HCT116 (cell line): ENCODE measurements at regions of chr3 and their contacts with region 1.

Region 1: DNA sequence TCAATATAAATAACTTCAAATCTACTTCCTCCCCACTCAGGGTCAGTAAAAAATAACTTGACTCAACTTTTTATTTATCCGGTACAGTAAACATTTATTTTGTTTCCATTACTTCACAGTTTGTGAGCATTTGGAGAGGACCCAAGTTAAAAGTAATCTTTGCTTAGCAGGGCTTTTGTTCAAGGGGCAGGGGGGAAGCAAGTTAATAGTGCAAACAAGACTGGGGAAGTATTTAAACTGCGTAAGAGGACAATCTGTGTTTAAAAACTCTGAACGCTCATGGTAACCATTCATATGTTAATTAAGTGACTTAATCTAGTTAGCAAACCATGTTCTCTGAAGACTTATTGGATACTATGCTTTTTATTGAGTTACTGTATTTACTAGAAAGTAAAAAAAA is 346.2 kb downstream of the SLC9A9 start:
- DNase-seq: no peak
- ATAC-seq: no peak
- H3K4me3 ChIP-seq: no peak overlapping the region
- H3K27ac ChIP-seq: no peak overlapping the region
- H3K4me1 ChIP-seq: no peaks in the 10 kb centered on the region
- H3K27me3 ChIP-seq: no peaks in the 10 kb centered on the region
- CTCF ChIP-seq: no peak
- POLR2A ChIP-seq: no peak
- RAD21 ChIP-seq: no peak

Region 2: DNA sequence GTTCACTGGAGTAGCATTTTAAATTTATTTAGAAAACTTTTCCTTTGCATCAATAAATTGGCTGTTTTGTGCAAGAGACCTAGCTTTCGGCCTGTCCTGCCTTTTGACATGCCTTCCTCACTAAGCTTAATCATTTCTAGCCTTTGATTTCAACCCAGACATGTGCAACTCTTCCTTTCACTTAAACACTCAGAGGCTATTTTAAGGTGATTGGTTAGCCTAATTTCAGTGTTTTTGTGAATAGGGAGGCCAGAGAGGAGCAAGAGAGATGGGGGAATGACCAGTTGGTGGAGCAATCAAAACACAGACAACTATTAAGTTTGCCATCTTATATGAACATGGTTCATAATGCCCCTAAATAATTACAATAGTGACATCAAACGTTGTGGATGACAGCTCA is 12.8 kb after region 1 on chr3:
- CTCF ChIA-PET with region 1: no interaction called
- POLR2A ChIA-PET with region 1: no interaction called
- RAD21 ChIA-PET with region 1: no interaction called
- intact Hi-C with region 1: loop called (anchors 1 kb)
- DNase-seq: no peak
- ATAC-seq: no peak
- H3K4me3 ChIP-seq: no peak overlapping the region
- H3K27ac ChIP-seq: no peak overlapping the region
- H3K4me1 ChIP-seq: no peaks in the 10 kb centered on the region
- H3K27me3 ChIP-seq: no peaks in the 10 kb centered on the region
- CTCF ChIP-seq: no peak
- POLR2A ChIP-seq: no peak
- RAD21 ChIP-seq: no peak